ENCODE measurements at regions of chr1 and their contacts with region 1.

Region 1: GRCh38 chr1:231500666-231501065 is 27.8 kb upstream of the TSNAX start:
- DNase-seq: no peak
- H3K4me3 ChIP-seq: no peak overlapping the region
- H3K27ac ChIP-seq: no peak overlapping the region
- H3K4me1 ChIP-seq: no peaks in the 10 kb centered on the region
- H3K27me3 ChIP-seq: no peaks in the 10 kb centered on the region
- CTCF ChIP-seq: no peak
- POLR2A ChIP-seq: no peak

Region 2: GRCh38 chr1:231301990-231302389 is 198.7 kb before region 1 on chr1:
- intact Hi-C with region 1: no loop called
- DNase-seq: no peak
- H3K4me3 ChIP-seq: no peak overlapping the region
- H3K27ac ChIP-seq: no peak overlapping the region
- H3K4me1 ChIP-seq: no peaks in the 10 kb centered on the region
- H3K27me3 ChIP-seq: no peaks in the 10 kb centered on the region
- CTCF ChIP-seq: no peak
- POLR2A ChIP-seq: no peak

Region 3: GRCh38 chr1:231515748-231516147 is 15.1 kb after region 1 on chr1:
- intact Hi-C with region 1: loop called (anchors 2 kb)
- DNase-seq: no peak
- H3K4me3 ChIP-seq: no peak overlapping the region
- H3K27ac ChIP-seq: no peak overlapping the region
- H3K4me1 ChIP-seq: no peaks in the 10 kb centered on the region
- H3K27me3 ChIP-seq: no peaks in the 10 kb centered on the region
- CTCF ChIP-seq: no peak
- POLR2A ChIP-seq: no peak

Measured in breast epithelium (tissue), 4 donors.